ENCODE measurements at regions of chr2 and their contacts with region 1.

Region 1: GRCh38 chr2:53969968-53970723 is 647 bp downstream of the PSME4 start:
- DNase-seq: no peak
- ATAC-seq: peak; percentile 53

Region 2: DNA sequence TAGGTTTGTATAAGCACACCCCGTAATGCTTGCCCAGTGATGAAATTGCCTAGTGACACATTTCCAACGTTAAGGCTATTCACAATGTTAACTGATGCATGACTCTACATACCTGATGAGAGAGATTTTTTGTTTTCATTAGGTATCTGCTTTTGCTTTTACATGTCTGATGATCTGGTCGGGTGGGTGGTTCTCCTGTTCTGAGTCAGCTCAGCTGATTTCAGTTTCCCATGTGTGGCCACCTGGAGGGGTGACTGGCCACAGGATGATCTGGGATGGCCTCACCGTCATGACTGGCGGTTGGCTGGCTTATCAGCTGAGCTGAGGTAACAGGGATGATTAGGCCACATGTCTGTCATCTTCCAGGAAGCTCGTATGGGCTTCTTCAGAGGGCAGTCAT is 111.4 kb after region 1 on chr2:
- intact Hi-C with region 1: loop called (anchors 10 kb)
- DNase-seq: no peak
- ATAC-seq: no peak